GM10248 (cell line): ENCODE measurements at regions of chr4 and their contacts with region 1.

Region 1: DNA sequence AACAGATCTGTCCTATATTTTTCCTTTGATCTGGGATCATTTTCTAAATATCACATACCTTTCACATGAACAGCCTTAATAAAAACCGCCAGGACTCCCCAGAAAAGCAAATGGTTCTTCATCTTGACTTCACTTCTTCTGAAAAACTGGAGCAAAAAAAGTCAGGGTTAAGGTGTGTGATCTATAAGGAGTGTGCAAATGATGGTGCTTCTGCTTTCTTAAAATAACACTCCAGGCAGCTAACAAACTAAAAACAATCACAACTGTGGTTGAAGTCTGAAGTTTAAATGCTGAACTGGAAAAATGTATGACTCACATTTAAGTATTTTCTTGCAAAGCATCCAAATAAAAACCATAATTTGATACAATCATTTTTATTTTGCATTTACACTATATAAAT is at the start of gene JCHAIN:
- DNase-seq: no peak
- CTCF ChIP-seq: no peak

Region 2: GRCh38 chr4:70651864-70652506 is 14.4 kb before region 1 on chr4:
- CTCF ChIA-PET with region 1: interaction called, 18 read pairs
- POLR2A ChIA-PET with region 1: no interaction called
- DNase-seq: peak; percentile 36
- CTCF ChIP-seq: peak; percentile 39

Region 3: DNA sequence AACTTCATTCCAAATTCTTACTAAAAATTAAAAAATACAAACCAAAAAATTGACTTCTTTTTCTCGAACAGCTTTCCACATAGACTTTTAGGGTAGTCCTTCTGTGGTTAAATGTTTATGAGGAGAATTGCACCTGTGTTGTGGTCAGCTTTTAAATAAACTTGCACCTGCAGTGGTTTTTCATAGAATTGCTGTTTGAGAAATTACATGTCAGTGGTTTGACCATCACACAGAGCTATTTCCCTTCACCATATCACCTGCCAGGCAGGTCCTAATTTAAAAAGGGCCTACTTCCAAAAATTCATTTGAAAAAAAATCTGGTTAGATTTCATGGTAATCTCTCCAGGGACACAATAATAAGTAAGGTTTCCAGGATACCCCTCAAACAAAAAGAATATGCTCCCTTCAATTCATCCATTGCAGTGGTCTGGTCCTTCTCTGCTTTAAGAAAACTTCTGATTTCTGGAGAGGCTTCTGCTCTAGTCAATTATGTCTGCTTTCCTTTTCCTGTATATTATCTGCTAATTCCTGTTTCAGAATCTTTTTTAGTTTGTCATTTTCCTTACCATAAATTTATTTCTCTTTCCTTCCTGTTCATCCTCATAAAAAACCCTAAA is 12.1 kb after region 1 on chr4:
- CTCF ChIA-PET with region 1: interaction called, 19 read pairs
- POLR2A ChIA-PET with region 1: interaction called, 3 read pairs
- DNase-seq: peak; percentile 31
- CTCF ChIP-seq: no peak

Region 4: DNA sequence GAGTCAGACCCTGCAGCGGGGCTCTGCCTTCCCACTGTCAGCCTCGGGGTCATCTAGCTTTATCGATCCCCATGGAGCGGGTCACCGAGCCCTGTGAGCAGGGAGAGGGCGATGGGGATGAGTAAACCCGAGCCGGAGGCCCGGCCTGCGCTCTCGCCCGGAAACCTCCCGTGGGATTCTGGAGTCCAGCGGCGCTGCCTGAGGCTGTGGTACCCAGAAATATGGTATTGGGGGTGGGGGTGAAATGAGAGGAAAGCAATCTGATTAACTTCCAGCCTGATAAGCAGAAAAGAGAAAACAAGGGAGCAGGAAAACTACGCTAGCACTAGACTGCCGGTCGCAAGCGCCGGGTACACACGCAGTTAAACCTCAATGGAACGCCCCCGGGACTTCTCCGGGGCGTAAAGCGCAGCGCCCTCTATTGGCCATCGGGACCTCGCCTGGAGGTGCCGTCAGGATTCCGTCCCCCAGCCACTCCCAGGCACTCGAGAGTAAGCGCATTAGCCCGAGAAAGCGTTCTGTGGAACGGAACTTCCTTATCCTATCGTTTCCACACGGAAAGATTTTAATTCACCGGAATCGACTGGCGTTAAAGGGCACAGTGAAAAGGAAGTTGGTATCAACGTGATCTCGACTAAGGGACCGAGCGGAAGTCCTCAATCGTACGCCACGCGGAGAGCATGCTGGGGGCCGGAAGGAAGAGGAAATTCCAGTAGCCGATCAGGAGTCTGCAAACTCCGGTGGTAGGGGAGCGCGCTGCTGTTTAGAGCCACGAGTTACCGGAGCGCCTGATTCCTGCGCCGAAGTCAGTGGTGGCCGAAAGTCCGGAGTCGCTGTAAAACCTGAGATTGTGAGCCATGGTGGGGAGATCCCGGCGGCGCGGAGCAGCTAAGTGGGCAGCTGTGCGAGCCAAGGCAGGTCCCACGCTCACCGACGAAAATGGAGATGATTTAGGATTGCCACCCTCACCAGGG is 21.7 kb after region 1 on chr4 and contains the start of gene UTP3:
- CTCF ChIA-PET with region 1: interaction called, 14 read pairs
- POLR2A ChIA-PET with region 1: interaction called, 3 read pairs
- DNase-seq: peak; percentile 87
- CTCF ChIP-seq: peak; percentile 95

Region 5: DNA sequence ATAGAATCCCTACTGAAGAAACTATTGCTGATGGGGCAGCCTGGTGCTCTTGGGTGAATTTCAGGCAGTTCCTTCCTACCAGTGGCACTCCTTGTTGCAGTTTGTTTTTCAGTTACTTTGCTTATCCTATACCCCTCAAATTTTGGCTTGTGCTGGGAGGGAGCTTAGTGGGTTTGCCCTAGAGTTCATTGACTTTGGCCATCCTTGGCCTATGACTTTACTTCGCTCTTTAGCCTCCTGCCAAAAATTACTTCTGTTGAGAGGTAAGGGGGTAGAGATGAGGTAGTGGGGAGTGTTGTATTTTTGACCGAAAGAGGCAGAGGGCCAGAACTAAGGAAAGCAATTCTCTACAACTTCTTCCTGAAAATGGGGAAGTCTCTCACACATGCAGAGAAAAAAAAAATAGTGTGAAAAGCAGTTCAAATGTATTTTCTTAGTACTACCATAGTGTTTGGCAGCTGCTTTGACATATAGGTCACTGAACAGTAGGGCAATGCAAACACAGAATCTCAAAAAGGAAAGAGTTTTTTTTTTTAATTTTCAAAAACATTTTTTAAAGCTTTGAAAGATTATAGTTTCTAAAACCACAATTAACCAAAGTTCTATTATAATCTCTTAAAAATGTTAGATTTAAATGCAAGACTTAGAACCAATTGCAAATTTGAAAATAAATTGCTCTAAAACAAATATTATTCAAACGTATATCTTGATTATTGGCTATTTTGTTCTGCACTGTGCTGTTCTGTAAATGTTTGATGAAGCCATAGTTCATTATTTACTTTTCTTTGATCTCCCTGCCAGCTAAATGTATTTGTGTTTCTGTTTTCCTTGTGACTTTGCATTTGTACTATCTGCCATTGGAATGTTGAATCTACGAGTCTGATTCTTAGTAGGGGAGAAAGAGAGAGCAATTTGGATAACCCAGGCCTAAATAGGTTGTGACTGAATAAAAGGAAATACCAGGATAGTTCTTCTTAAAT is 400.7 kb after region 1 on chr4:
- CTCF ChIA-PET with region 1: no interaction called
- POLR2A ChIA-PET with region 1: no interaction called
- DNase-seq: no peak
- CTCF ChIP-seq: no peak